ENCODE measurements at regions of chr1 and their contacts with region 1.

Region 1: DNA sequence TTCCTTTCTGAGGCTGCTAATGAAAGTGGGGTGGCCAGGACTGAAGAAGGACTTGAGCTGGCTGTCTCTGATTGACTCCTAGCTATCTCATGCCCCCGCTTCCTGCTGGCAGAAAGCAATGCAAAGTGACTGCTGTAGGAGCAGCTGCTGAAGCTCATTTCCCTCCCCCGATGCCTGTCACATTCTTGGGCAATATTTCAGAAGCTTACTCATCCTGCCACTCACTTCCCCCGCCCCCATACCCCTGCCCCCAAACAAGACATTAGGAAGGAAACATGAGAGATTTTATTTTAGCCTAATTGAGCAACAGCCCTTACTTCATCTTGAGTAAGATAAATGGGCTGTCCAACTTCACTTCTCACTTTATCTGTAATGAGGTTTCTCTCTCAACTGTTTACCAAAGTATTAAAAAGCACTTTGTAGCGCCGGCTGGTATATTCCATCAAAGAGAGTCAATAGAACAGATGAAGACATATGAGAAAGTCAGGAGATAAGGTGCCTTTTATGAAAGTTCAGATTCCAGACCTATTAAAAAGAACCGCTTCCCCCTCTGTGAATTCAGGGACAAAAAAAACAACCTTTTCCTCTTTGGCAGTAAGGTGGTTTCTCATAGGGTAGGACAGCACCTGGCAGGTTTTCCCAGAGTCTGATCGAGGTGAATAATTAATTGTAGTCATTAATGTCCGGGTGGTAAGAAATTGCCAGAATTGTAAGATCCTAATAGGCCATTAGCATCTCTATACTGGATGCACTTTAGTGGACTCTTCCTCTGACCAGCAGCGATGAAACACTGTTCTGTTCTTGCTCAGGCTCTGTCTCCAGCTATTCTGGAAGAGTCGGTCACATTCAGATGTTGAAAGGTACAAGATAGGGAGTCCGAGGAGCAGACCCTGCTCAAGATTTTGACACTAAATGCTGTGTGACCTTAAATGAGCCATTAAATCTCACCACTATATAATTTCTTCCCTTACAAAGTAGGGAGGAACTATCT is 70.2 kb downstream of the SH3GLB1 start:
- DNase-seq: peak; percentile 82 to 91
- H3K4me3 ChIP-seq: no peak overlapping the region
- H3K4me3 Mint-ChIP-seq: peak overlapping the region; percentile 71
- H3K27ac Mint-ChIP-seq: peak overlapping the region; percentile 97
- H3K4me1 ChIP-seq: peaks cover 43% of the 10 kb centered on the region
- H3K4me1 Mint-ChIP-seq: peaks cover 47% of the 10 kb centered on the region
- H3K27me3 ChIP-seq: no peaks in the 10 kb centered on the region
- H3K27me3 Mint-ChIP-seq: no peaks in the 10 kb centered on the region
- CTCF ChIP-seq: no peak

Region 2: GRCh38 chr1:86704458-86704971 is 70.1 kb before region 1 on chr1 and contains the start of gene SH3GLB1:
- CTCF ChIA-PET with region 1: no interaction called
- POLR2A ChIA-PET with region 1: no interaction called
- intact Hi-C with region 1: loop called (anchors 2 kb)
- DNase-seq: peak; percentile 91 to 92
- H3K4me3 ChIP-seq: peak within 1 kb of the TSS; percentile 82
- H3K4me3 Mint-ChIP-seq: peak within 1 kb of the TSS; percentile 98
- H3K27ac Mint-ChIP-seq: peak within 1 kb of the TSS; percentile 95
- H3K4me1 ChIP-seq: peaks cover 10% of the 10 kb centered on the region
- H3K4me1 Mint-ChIP-seq: peaks cover 7% of the 10 kb centered on the region
- H3K27me3 ChIP-seq: no peaks in the 10 kb centered on the region
- H3K27me3 Mint-ChIP-seq: no peaks in the 10 kb centered on the region
- CTCF ChIP-seq: peak; percentile 68 to 76
- total RNA-seq, gene SH3GLB1: 48.7 and 50.6 TPM in 2 replicates

Region 3: DNA sequence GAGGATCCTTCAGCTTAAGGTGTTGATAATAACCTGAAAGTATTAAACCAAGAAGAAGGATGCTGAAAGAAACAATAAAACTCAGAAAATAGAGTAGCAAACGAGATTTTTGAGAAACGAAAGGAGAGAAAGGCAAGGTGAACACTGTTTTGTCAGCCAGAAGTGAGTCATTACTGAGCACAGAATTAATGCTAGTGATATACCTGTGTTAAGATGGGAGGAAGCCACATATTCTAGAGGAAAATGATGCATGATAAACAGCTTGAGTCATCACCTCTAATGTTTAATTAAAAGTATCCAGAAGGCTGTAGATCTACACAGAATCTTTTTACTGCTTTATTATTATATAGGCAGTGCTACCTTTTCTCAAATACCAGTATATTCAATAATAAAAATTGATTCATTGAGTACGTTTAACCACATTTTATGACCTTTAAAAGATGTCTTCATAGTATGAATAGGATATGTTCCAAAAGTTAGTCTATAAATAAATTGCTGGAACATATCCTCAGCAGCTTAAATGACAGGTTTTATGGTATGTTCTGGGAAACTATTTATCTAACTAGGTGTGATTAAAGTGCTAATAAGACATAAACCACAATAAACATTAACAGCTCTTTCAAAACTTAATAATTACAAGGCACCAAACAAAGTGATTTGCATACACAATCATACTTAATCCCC is 59.9 kb before region 1 on chr1:
- CTCF ChIA-PET with region 1: no interaction called
- POLR2A ChIA-PET with region 1: no interaction called
- intact Hi-C with region 1: no loop called
- DNase-seq: no peak
- H3K4me3 ChIP-seq: no peak overlapping the region
- H3K4me3 Mint-ChIP-seq: no peak overlapping the region
- H3K27ac Mint-ChIP-seq: no peak overlapping the region
- H3K4me1 ChIP-seq: peaks cover 8% of the 10 kb centered on the region
- H3K4me1 Mint-ChIP-seq: peaks cover 7% of the 10 kb centered on the region
- H3K27me3 ChIP-seq: no peaks in the 10 kb centered on the region
- H3K27me3 Mint-ChIP-seq: no peaks in the 10 kb centered on the region
- CTCF ChIP-seq: no peak

Region 4: DNA sequence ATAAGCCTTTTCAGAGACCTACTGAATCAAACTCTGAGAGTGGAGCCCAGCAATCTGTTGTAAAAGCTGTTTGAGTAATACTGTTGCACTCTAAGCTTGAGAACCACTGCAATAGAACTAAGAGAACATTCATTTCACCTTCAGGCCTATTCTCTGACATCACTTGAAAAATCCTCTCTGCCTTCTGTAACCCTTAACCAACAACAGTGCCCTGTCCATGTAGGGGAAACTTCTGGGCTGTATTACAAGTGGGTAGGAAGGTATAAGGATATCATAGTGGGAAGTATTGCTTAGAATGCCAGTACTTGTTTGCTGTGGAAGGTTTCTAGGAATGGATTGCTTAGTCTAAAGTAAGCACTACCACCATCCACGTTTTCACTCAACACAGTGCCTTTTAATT is 27.3 kb before region 1 on chr1:
- CTCF ChIA-PET with region 1: no interaction called
- POLR2A ChIA-PET with region 1: no interaction called
- intact Hi-C with region 1: loop called (anchors 2 kb)
- DNase-seq: no peak
- H3K4me3 ChIP-seq: no peak overlapping the region
- H3K4me3 Mint-ChIP-seq: no peak overlapping the region
- H3K27ac Mint-ChIP-seq: no peak overlapping the region
- H3K4me1 ChIP-seq: peaks cover 14% of the 10 kb centered on the region; the same call in 1 of the 2 replicates
- H3K4me1 Mint-ChIP-seq: peaks cover 13% of the 10 kb centered on the region
- H3K27me3 ChIP-seq: no peaks in the 10 kb centered on the region
- H3K27me3 Mint-ChIP-seq: no peaks in the 10 kb centered on the region
- CTCF ChIP-seq: no peak

Region 5: DNA sequence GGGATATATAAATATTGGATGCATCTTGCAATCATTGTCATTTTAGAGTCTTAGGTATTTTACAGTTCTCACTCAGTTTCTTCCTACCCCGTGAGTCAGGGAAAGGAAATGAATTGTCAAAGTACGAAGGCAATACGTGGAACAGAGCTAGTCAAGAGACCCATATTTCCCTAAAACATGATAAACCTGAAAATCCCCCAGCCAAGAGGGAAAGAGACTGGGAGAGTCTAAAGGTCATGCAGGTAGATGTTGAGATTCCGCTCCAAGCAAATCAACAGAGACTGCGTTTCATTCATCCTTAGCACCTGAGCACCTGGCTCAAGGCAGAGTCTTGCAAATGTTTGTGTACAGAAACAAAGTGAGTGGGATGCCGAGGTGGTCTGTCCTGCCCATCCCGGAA is 12.3 kb before region 1 on chr1:
- CTCF ChIA-PET with region 1: no interaction called
- POLR2A ChIA-PET with region 1: no interaction called
- intact Hi-C with region 1: loop called (anchors 1 kb)
- DNase-seq: peak in 1 of 2 experiments; percentile 28
- H3K4me3 ChIP-seq: no peak overlapping the region
- H3K4me3 Mint-ChIP-seq: peak overlapping the region; percentile 60
- H3K27ac Mint-ChIP-seq: peak overlapping the region; percentile 75
- H3K4me1 ChIP-seq: peaks cover 6% of the 10 kb centered on the region
- H3K4me1 Mint-ChIP-seq: peaks cover 7% of the 10 kb centered on the region
- H3K27me3 ChIP-seq: no peaks in the 10 kb centered on the region
- H3K27me3 Mint-ChIP-seq: no peaks in the 10 kb centered on the region
- CTCF ChIP-seq: no peak

Region 6: DNA sequence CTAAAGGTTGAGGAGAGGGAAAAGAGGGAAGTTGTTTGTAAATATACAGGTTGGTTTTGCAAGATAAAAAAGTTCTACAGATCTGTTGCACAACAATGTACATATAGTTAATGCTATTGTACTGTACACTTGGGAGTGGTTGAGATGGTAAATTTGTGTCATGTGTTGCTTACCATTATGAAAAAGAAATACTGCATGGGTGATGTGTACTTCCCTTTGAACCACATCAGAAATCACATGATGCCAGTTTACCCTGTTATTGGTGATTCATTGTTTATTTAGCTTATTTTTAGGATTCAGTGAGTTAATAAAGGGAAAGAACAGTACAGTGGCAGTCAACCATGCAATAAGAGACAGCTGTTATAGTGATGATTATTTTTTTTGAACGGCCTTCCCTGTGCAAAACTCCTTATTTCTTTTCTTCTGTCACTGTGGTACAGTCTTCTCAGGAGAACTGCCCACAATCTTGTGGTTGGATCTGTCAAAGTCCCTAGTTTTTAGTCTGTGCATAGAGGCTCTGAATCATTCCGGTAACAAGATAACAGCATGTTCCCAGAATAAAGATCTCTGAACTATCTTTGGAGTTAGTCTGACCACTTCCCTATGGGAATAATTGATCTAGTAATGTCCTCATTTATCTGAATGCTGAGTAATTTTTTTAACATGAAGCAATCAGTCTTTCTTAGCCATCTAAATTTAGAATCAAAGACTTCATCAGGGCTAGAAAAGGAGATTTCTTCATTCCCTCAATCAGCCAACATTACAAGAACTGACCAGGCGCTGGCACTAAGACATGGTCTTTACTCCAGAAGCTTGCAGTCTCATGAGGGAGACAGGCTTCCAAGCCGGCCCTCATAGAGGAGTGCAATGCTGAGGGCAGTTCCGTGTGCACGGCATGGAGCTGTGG is 14.0 kb after region 1 on chr1:
- CTCF ChIA-PET with region 1: no interaction called
- POLR2A ChIA-PET with region 1: no interaction called
- intact Hi-C with region 1: no loop called
- DNase-seq: no peak
- H3K4me3 ChIP-seq: no peak overlapping the region
- H3K4me3 Mint-ChIP-seq: no peak overlapping the region
- H3K27ac Mint-ChIP-seq: no peak overlapping the region
- H3K4me1 ChIP-seq: peaks cover 26% of the 10 kb centered on the region
- H3K4me1 Mint-ChIP-seq: peaks cover 14% of the 10 kb centered on the region
- H3K27me3 ChIP-seq: no peaks in the 10 kb centered on the region
- H3K27me3 Mint-ChIP-seq: no peaks in the 10 kb centered on the region
- CTCF ChIP-seq: no peak

Region 7: GRCh38 chr1:86823821-86824500 is 49.4 kb after region 1 on chr1:
- CTCF ChIA-PET with region 1: no interaction called
- POLR2A ChIA-PET with region 1: no interaction called
- intact Hi-C with region 1: loop called (anchors 1 kb)
- DNase-seq: peak in 1 of 2 experiments; percentile 40
- H3K4me3 ChIP-seq: no peak overlapping the region
- H3K4me3 Mint-ChIP-seq: peak overlapping the region; percentile 9
- H3K27ac Mint-ChIP-seq: peak overlapping the region; percentile 50
- H3K4me1 ChIP-seq: peaks cover 32% of the 10 kb centered on the region
- H3K4me1 Mint-ChIP-seq: peaks cover 22% of the 10 kb centered on the region
- H3K27me3 ChIP-seq: no peaks in the 10 kb centered on the region
- H3K27me3 Mint-ChIP-seq: no peaks in the 10 kb centered on the region
- CTCF ChIP-seq: no peak

Region 8: GRCh38 chr1:86887479-86888162 is 113.0 kb after region 1 on chr1:
- CTCF ChIA-PET with region 1: no interaction called
- POLR2A ChIA-PET with region 1: no interaction called
- intact Hi-C with region 1: no loop called
- DNase-seq: no peak
- H3K4me3 ChIP-seq: no peak overlapping the region
- H3K4me3 Mint-ChIP-seq: no peak overlapping the region
- H3K27ac Mint-ChIP-seq: no peak overlapping the region
- H3K4me1 ChIP-seq: no peaks in the 10 kb centered on the region
- H3K4me1 Mint-ChIP-seq: no peaks in the 10 kb centered on the region
- H3K27me3 ChIP-seq: no peaks in the 10 kb centered on the region
- H3K27me3 Mint-ChIP-seq: no peaks in the 10 kb centered on the region
- CTCF ChIP-seq: no peak

Region 9: GRCh38 chr1:86913896-86914634 is 139.5 kb after region 1 on chr1 and contains the start of gene SELENOF:
- CTCF ChIA-PET with region 1: no interaction called
- POLR2A ChIA-PET with region 1: interaction called, 7 read pairs
- intact Hi-C with region 1: loop called (anchors 2 kb)
- DNase-seq: peak; percentile 96 to 98
- H3K4me3 ChIP-seq: peak within 1 kb of the TSS; percentile 92
- H3K4me3 Mint-ChIP-seq: no peak within 1 kb of the TSS
- H3K27ac Mint-ChIP-seq: no peak within 1 kb of the TSS
- H3K4me1 ChIP-seq: no peaks in the 10 kb centered on the region; the same call in none of the 2 replicates
- H3K4me1 Mint-ChIP-seq: peaks cover 11% of the 10 kb centered on the region
- H3K27me3 ChIP-seq: no peaks in the 10 kb centered on the region
- H3K27me3 Mint-ChIP-seq: no peaks in the 10 kb centered on the region
- CTCF ChIP-seq: no peak
- total RNA-seq, gene SELENOF: 161 and 166 TPM in 2 replicates

Region 10: GRCh38 chr1:86965012-86965826 is 190.6 kb after region 1 on chr1:
- CTCF ChIA-PET with region 1: no interaction called
- POLR2A ChIA-PET with region 1: no interaction called
- intact Hi-C with region 1: loop called (anchors 2 kb)
- DNase-seq: peak in 1 of 2 experiments; percentile 50
- H3K4me3 ChIP-seq: no peak overlapping the region
- H3K4me3 Mint-ChIP-seq: no peak overlapping the region
- H3K27ac Mint-ChIP-seq: no peak overlapping the region
- H3K4me1 ChIP-seq: peaks cover 13% of the 10 kb centered on the region; the same call in 1 of the 2 replicates
- H3K4me1 Mint-ChIP-seq: no peaks in the 10 kb centered on the region
- H3K27me3 ChIP-seq: no peaks in the 10 kb centered on the region
- H3K27me3 Mint-ChIP-seq: no peaks in the 10 kb centered on the region
- CTCF ChIP-seq: peak; percentile 31 to 53